Activated naive CD4-positive, alpha-beta T cell treated with anti-CD3 and anti-CD28 coated beads for 36 hours (primary cell): ENCODE measurements at regions of chr3 and their contacts with region 1.

Region 1: DNA sequence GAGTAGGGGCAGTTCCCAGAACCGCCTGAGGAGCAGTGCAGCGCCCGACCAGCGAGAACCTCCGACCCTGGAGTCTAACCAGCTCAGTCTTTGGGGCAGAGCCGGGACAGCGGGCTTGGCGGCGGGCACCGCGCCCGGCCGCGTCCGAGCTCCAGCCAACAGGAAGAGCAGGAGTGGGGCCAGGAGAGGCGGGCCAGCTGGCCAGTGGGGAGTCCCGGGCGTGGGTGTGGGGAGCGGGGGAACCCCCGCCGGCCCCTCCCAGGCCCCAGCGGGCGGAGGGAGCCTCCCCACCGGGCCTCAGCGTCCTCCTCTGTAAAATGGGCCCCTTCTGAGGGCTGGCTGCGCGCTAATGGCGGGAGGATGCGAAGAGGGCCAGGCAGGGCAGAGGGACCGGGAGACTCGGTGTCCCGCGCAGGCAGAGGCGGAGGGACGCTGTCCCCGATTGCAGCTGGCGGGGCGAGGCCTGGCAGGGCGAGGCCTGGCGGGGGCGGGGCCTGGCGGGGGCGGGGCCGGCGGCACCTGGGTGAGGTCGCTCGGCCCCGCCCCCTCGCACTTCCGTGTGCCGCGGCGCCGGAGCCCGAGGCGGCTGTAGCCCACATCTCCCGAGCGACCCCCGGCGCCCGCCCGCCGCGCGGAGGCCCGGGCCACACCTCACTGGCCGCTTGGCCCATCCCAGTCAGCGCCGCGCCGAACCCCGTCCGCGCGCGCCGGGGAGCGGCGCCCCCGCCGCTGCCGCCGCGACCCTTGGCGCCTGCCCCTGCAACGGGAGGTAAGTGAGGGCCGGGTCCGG is at the start of gene PRKCD:
- DNase-seq: peak; percentile 76
- H3K4me3 Mint-ChIP-seq: peak within 1 kb of the TSS; percentile 74
- H3K27ac Mint-ChIP-seq: peak within 1 kb of the TSS; percentile 59
- H3K4me1 Mint-ChIP-seq: peaks cover 18% of the 10 kb centered on the region
- H3K27me3 Mint-ChIP-seq: peaks cover 18% of the 10 kb centered on the region
- total RNA-seq, gene PRKCD: 9.1 to 10.2 TPM

Region 2: GRCh38 chr3:52971895-52972294 is 189.0 kb before region 1 on chr3:
- CTCF ChIA-PET with region 1: no interaction called
- intact Hi-C with region 1: no loop called
- DNase-seq: no peak
- H3K4me3 Mint-ChIP-seq: no peak overlapping the region
- H3K27ac Mint-ChIP-seq: no peak overlapping the region
- H3K4me1 Mint-ChIP-seq: peaks cover 14% of the 10 kb centered on the region
- H3K27me3 Mint-ChIP-seq: no peaks in the 10 kb centered on the region

Region 3: DNA sequence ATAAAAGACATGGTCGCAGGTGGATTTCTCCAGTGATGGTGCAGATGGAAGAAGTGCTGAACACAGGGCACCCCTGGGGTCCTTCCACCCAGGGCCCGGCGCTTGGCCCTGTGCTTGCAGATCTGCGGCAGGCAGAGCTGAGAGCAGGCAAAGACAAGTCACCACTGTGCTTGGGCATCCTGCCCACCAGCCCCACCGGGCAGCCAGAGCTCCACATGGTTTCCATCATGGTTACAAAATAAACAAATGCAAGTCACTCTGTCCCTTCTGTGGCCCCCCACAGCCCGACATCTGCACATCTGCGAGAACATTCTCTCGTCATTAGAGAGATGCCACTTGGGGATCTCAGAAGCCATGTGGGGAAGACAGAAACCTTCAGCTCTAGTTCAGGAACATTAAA is 77.3 kb before region 1 on chr3:
- CTCF ChIA-PET with region 1: no interaction called
- intact Hi-C with region 1: no loop called
- DNase-seq: no peak
- H3K4me3 Mint-ChIP-seq: no peak overlapping the region
- H3K27ac Mint-ChIP-seq: no peak overlapping the region
- H3K4me1 Mint-ChIP-seq: peaks cover 5% of the 10 kb centered on the region
- H3K27me3 Mint-ChIP-seq: no peaks in the 10 kb centered on the region

Region 4: GRCh38 chr3:53102601-53103147 is 58.2 kb before region 1 on chr3:
- CTCF ChIA-PET with region 1: no interaction called
- intact Hi-C with region 1: loop called (anchors 2 kb)
- DNase-seq: peak; percentile 84
- H3K4me3 Mint-ChIP-seq: peak overlapping the region; percentile 11
- H3K27ac Mint-ChIP-seq: peak overlapping the region; percentile 80
- H3K4me1 Mint-ChIP-seq: peaks cover 68% of the 10 kb centered on the region
- H3K27me3 Mint-ChIP-seq: no peaks in the 10 kb centered on the region